ENCODE measurements at regions of chr4 and their contacts with region 1.

Region 1: GRCh38 chr4:14671146-14671545 is 331.1 kb upstream of the CPEB2 start:
- DNase-seq: no peak
- ATAC-seq: no peak
- H3K4me3 ChIP-seq: no peak overlapping the region
- H3K27ac ChIP-seq: no peak overlapping the region
- H3K4me1 ChIP-seq: no peaks in the 10 kb centered on the region
- H3K27me3 ChIP-seq: no peaks in the 10 kb centered on the region; a peak in 1 of 4 replicates
- CTCF ChIP-seq: no peak
- EP300 ChIP-seq: no peak
- POLR2A ChIP-seq: no peak
- RAD21 ChIP-seq: no peak

Region 2: DNA sequence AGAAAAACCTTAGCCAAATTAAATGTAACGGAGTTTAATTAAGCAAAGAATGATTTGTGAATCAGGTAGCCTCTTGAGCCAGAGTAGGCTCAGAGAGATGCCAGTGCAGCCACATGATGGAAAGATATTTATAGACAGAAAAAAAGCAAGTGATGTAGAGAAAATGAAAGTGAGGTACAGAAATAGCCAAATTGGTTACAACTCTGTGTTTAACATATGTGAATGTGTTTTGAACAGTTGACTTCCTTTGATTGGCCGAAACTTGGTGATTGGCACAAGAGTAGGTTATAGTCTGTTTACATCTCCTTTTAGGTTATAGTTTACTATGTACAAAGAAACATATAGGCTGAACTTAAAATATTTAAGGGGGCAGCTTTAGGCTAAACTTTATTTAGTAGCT is 583.7 kb before region 1 on chr4:
- CTCF ChIA-PET with region 1: no interaction called
- POLR2A ChIA-PET with region 1: no interaction called
- RAD21 ChIA-PET with region 1: no interaction called
- SMC1A ChIA-PET with region 1: no interaction called
- in situ Hi-C with region 1: no loop called
- intact Hi-C with region 1: no loop called
- DNase-seq: peak; percentile 16
- ATAC-seq: peak; percentile 77
- H3K4me3 ChIP-seq: no peak overlapping the region
- H3K27ac ChIP-seq: no peak overlapping the region
- H3K4me1 ChIP-seq: no peaks in the 10 kb centered on the region
- H3K27me3 ChIP-seq: no peaks in the 10 kb centered on the region
- CTCF ChIP-seq: no peak
- EP300 ChIP-seq: no peak
- POLR2A ChIP-seq: no peak
- RAD21 ChIP-seq: no peak

Region 3: DNA sequence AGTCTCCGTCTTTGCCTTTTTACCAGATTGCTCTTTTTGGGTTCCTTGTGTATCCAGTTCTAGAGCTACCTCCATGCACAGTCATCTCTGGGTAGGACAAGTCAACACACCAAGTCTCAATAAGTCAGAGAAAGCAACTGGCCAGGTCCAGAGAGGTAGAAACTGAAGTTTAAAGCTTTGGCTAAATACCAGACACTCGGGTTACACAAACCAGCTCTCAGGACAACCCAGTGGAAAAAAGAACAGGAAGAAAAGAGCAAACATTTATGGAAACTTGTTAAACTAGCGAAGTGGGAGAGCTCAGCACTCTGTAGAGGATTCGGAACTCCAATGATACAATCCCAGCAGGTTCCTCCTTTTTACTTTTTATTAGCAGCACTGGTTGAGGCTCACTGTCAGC is 40.1 kb after region 1 on chr4:
- CTCF ChIA-PET with region 1: no interaction called
- POLR2A ChIA-PET with region 1: no interaction called
- RAD21 ChIA-PET with region 1: no interaction called
- SMC1A ChIA-PET with region 1: no interaction called
- in situ Hi-C with region 1: loop called (anchors 5 kb)
- intact Hi-C with region 1: no loop called
- DNase-seq: no peak
- ATAC-seq: no peak
- H3K4me3 ChIP-seq: no peak overlapping the region
- H3K27ac ChIP-seq: no peak overlapping the region
- H3K4me1 ChIP-seq: no peaks in the 10 kb centered on the region
- H3K27me3 ChIP-seq: no peaks in the 10 kb centered on the region
- CTCF ChIP-seq: no peak
- EP300 ChIP-seq: no peak
- POLR2A ChIP-seq: no peak
- RAD21 ChIP-seq: no peak

Measured in GM12878 (cell line).